Esophagus squamous epithelium (tissue), 5 donors: ENCODE measurements at regions of chr7 and their contacts with region 1.

Region 1: DNA sequence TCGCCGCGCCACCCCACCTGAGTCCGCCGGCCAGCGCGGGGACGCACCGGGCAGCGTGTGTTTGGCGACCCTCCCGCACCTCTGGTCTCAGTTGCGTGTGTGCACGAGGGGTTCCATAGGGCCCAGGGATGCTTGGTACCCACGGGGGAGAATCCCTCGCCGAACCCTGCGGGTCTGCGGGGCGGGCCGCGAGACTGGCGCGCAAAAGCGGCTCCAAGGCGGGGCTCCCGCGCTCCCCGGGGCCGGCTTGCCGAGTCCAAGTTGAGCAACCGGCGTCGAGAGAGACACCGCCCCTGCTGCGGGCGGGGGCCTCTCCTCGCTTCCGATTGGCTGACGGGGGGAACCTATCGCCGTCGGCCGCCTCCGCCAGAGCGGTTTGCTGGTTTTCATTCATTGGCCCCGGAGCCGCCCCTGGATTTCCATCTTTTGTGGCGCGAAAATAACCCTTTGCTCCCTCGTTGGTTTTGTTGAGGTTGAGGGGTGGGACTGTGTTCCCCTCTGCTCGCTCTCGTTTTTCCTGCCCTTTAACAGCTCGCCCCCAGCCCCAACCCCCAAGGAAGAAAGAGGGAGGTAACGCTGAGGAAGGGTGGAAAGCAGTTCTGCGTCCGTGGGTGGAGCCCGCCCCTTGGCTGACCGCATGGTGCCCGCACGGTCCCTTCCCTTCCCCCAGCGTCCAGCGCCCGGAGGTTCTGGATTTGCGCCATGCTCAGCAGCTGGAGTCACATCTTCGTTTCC is 4.0 kb upstream of the IGF2BP3 start:
- DNase-seq: no peak
- H3K4me3 ChIP-seq: peak overlapping the region; percentile 16 to 62 (median 37)
- H3K27ac ChIP-seq: no peak overlapping the region
- H3K4me1 ChIP-seq: peaks cover 28 to 38% (median 32%) of the 10 kb centered on the region in 3 donors
- H3K27me3 ChIP-seq: peaks cover 38 to 100% (median 69%) of the 10 kb centered on the region in 4 donors
- CTCF ChIP-seq: no peak
- POLR2A ChIP-seq: peak in 1 of 4 donors; percentile 7

Region 2: DNA sequence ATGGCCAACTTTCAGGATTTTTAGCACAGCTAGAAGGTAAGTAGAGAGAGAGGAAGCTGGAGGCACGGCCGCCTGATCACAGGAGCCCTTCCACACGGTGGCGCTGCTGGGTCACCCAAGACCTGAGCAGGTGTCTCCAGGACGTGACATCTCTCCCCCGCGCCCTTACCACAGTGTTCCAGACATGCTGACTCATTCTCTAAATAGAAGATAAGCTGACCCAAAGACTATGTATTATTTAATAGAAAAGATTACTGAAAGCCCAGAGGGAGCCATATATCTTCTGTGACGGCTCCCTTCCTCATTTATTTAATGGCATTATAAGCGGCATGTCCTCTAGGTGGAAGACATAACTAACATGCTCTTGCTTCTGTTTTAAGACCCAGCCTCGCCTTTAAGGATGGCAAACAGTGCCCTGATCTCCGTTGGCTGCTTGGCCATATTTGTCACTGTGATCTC is 201.1 kb before region 1 on chr7:
- intact Hi-C with region 1: loop called (anchors 10 kb)
- DNase-seq: peak; percentile 47
- H3K4me3 ChIP-seq: no peak overlapping the region
- H3K27ac ChIP-seq: peak overlapping the region in 1 of 4 donors; percentile 28
- H3K4me1 ChIP-seq: peaks cover 0 to 10% (median 0%) of the 10 kb centered on the region in 3 donors
- H3K27me3 ChIP-seq: no peaks in the 10 kb centered on the region
- CTCF ChIP-seq: peak; percentile 54 to 87 (median 80)
- POLR2A ChIP-seq: no peak